ENCODE measurements at regions of chr19 and their contacts with region 1.

Region 1: DNA sequence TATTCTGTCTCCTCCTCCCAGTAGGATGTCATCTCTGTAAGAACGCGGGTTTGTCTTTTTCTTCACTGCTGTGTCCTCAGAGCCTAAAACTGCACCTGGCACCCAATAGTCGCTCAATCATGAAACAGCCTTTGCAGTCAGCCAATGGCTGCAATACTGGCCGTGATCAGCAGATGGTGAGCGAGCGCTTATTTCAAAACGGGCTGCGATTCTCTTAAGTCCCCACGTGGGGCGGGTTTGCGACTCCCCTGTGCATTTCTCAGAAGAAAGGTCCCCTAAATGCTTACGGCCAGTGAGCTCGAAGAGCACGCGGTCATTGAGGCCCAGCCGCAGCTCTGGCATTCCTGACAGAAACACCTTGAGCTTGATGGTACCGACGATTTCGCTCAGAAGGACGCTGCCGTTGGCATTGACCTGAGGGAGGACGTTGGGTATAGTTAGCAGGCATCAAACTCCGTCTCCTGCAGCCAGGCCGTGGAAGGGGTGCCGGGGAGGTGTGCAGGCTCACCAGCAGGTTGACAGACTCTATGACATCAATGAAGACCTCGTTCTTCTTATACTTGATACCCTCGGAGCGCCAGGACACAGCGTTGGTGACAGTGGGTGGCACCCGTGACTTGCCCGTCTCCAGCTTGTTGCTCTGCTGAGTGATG is 6.0 kb downstream of the AP1M2 start:
- DNase-seq: peak; percentile 83
- H3K4me3 ChIP-seq: no peak overlapping the region
- H3K27ac ChIP-seq: no peak overlapping the region
- H3K27me3 ChIP-seq: peaks cover 9% of the 10 kb centered on the region
- CTCF ChIP-seq: peak; percentile 100

Region 2: DNA sequence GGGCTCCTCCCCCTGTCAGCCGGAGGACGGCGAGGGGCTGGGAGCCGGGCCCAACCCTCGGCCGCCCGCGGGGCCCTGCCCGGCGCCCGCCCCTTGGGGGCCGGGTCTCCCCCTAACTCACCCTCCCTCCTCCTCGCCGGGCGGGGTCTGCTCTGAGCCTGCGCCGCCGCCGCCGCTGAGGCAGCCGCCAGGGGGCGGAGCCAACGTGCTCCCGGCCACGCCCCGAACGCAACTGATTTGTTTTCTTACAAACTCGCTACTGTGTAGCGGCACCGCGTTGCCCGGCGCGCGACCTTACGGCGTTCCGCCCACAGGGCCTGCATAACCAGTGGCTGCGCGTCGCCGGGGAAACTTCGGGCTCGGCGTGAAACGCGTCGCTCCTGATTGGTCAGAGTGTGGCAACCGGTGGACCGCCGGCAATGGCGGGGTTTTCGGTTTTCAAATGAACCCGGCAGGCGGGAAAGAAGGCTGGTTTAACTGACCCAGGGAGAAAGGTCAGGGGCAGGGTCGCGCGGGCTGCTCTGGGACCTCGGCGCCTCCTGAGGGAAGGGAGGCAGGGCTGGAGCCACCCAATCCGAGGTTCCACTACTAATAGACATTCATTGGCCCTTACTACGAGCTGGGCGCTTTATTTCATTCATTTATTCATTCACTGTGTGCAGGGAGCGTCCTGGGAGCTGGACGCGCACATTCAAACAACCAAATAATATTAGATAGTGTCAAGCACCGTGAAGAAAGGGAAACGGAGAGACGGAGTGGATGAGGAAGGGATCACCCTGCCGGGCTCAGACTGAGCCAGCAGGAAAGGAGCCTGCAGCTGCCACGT is 12.1 kb before region 1 on chr19 and contains the start of gene CDKN2D:
- CTCF ChIA-PET with region 1: interaction called, 12 read pairs
- POLR2A ChIA-PET with region 1: no interaction called
- DNase-seq: peak; percentile 99
- H3K4me3 ChIP-seq: peak within 1 kb of the TSS; percentile 69
- H3K27ac ChIP-seq: peak within 1 kb of the TSS; percentile 21
- H3K27me3 ChIP-seq: no peaks in the 10 kb centered on the region
- CTCF ChIP-seq: no peak
- polyA plus RNA-seq, gene CDKN2D: 3.9 and 4.3 TPM in 2 replicates

Region 3: GRCh38 chr19:10593820-10594637 is 12.9 kb after region 1 on chr19:
- CTCF ChIA-PET with region 1: interaction called, 13 read pairs
- POLR2A ChIA-PET with region 1: no interaction called
- DNase-seq: no peak
- H3K4me3 ChIP-seq: no peak overlapping the region
- H3K27ac ChIP-seq: no peak overlapping the region
- H3K27me3 ChIP-seq: peaks cover 8% of the 10 kb centered on the region
- CTCF ChIP-seq: no peak

Region 4: GRCh38 chr19:10620786-10621185 is 39.7 kb after region 1 on chr19:
- CTCF ChIA-PET with region 1: interaction called, 17 read pairs
- POLR2A ChIA-PET with region 1: no interaction called
- DNase-seq: no peak
- H3K4me3 ChIP-seq: no peak overlapping the region
- H3K27ac ChIP-seq: no peak overlapping the region
- H3K27me3 ChIP-seq: no peaks in the 10 kb centered on the region
- CTCF ChIP-seq: no peak

Region 5: GRCh38 chr19:10644260-10645007 is 63.3 kb after region 1 on chr19:
- CTCF ChIA-PET with region 1: interaction called, 273 read pairs
- POLR2A ChIA-PET with region 1: interaction called, 8 read pairs
- DNase-seq: peak; percentile 45
- H3K4me3 ChIP-seq: no peak overlapping the region
- H3K27ac ChIP-seq: no peak overlapping the region
- H3K27me3 ChIP-seq: no peaks in the 10 kb centered on the region
- CTCF ChIP-seq: peak; percentile 95

Region 6: DNA sequence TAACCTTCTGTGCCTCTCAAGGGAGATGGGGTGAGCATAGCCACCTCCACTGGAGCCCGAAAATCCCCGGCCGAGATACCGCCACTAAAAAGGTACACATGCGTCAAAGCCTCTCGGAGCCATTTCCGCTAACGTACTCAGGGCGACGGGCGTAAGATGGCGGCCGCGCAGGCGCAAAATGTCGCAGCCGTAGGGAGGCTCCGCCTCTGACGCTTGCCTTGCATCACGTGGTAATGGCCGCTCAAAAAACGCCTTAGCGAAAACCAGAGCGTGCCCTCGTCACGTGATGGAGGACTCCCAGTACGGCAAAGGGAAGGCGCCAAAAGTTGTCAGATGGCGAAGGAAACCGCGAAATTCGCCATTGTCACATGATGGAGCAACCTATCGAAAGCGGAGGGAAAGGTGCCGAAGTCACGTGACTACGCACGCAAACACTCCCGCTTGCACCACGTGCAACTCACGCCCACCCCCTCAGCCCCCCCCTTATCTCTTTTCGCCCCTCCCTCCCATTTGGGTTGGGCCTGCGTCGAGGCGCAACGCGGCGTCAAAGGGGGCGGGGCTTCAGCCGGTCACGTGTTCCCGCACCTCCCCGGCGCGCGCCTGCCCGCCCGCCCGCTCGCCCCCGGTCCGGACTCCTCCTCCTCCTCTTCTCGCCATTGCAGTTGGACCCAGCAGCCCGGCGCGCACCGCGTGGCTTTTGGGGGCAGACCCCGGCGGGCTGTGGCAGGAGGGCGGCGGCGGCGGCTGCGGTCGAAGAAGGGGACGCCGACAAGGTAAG is 72.8 kb after region 1 on chr19 and contains the start of gene ILF3:
- CTCF ChIA-PET with region 1: interaction called, 273 read pairs
- POLR2A ChIA-PET with region 1: interaction called, 3 read pairs
- DNase-seq: peak; percentile 100
- H3K4me3 ChIP-seq: peak within 1 kb of the TSS; percentile 98
- H3K27ac ChIP-seq: peak within 1 kb of the TSS; percentile 99
- H3K27me3 ChIP-seq: no peaks in the 10 kb centered on the region
- CTCF ChIP-seq: no peak
- polyA plus RNA-seq, gene ILF3: 143 and 155 TPM in 2 replicates

Region 7: DNA sequence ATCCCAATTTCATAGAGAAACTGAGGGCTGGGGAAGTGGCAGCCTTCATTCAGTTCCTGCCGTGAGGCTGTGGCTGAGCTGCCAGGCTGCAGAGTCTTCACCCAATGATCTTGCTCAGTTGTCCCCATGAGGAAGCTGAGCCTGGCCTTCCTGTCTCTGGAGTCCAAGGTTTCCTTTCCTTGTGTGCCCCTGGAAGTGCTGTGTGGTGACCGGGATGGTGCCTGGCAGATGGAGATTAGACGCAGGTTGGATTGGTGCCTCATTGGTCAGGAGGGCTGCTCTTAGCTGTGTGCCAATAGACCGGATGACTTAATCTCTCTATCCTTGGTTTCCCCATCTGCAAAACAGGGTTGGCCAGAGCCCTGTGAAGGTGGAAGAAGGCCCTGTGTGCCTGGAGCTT is 161.4 kb after region 1 on chr19:
- CTCF ChIA-PET with region 1: no interaction called
- POLR2A ChIA-PET with region 1: no interaction called
- DNase-seq: no peak
- H3K4me3 ChIP-seq: no peak overlapping the region
- H3K27ac ChIP-seq: no peak overlapping the region
- H3K27me3 ChIP-seq: no peaks in the 10 kb centered on the region
- CTCF ChIP-seq: no peak